Left ventricle myocardium superior (tissue), 1 donor: ENCODE measurements at regions of chr1 and their contacts with region 1.

Region 1: DNA sequence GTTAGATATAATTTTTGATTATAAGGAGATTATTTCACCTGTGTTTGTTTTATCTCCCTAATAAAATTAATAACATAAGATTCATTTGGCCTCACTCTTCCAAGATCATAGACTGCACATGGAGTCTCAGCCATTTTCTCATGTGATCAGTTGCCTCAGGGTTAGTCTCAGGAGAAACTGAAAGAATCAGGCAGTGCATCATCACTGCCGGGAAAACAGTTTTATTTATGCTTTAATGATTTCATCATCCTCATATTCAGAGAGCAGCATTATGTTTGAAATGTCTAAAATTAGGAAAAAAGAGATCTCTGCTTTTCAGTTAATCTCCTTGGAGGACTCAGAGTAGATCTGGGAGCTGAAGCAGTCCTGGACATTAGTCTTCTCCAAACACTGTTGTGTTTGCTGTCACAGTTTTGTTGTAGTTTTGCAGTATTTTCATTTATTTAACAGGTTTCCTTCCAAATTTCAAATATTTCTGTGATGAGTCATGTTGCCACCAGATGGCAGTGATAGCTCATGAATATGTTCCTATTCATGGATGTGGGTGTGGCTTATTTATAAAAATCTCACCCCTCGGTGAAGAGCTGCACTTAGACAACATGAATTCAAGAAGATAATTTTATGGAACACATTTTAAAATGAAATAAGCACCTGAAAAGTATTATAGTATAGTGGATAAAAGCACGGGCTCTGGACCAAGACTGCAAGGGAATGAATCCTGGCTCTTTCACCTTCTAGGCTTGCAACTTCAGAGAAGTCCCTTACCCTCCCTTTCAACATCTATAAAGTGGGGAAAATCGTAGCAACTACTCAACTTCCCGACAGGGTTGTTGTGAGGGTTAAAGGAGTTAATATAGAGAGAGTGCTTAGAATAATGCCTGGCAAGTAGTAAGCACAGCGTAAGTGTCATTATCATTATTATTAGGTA is 31.2 kb downstream of the CHD1L start:
- DNase-seq: no peak
- ATAC-seq: peak; percentile 83

Region 2: DNA sequence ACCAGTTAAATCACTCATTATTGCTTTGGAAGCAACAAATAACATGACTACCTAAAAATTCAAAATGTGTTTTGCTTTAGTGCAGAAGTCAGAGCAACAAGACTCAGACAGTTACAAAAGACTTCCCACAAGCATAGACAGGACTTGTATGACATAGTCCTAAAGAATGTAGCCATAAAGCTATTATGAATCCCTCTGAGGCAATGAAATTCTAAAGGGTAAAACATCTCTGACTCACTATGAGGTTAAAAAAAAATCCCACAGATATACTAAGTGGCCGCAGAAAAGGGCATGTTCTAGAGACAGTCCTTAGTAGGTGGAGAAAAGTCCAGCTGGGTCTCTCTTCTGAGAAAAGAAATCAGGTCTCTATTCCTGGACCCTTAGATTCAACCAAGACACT is 106.3 kb before region 1 on chr1:
- intact Hi-C with region 1: no loop called
- DNase-seq: no peak
- ATAC-seq: no peak

Region 3: GRCh38 chr1:147389532-147390524 is 116.2 kb after region 1 on chr1:
- intact Hi-C with region 1: loop called (anchors 5 kb)
- DNase-seq: no peak
- ATAC-seq: peak; percentile 46